Activated CD4-positive, alpha-beta T cell treated with anti-CD3 and anti-CD28 coated beads, Interleukin-2, amount 10 ng/mL, durations not matched to agents 7 days and 5 days (primary cell): ENCODE measurements at regions of chr2 and their contacts with region 1.

Region 1: DNA sequence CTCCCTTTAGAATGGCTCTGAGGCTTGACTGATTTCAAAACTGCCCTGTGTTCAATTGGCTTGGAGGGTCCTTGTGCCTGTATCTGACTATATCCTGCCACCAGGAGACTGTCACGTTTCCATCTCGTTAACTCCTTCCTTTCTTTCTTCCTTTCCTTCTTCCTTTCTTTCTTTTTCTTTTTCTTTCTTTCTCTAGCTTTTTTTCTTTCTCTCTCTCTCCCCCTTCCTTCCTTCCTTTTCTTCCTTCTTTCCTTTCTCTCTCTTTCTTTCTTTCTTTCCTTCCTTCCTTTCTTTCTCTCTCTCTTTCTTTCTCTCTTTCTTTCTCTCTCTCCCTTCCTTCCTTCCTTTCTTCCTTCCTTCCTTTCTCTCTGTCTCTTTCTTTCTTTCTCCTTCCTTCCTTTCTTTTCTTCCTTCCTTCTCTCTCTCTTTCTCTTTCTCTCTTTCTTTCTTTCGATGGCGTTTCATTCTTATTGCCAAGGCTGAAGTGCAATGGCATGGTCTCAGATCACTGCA is 38.1 kb upstream of the EML6 start:
- DNase-seq: no peak
- H3K4me3 Mint-ChIP-seq: no peak overlapping the region
- H3K27ac Mint-ChIP-seq: no peak overlapping the region
- H3K4me1 Mint-ChIP-seq: peaks cover 39% of the 10 kb centered on the region
- H3K27me3 Mint-ChIP-seq: peaks cover 27% of the 10 kb centered on the region

Region 2: GRCh38 chr2:54665436-54665856 is 19.9 kb before region 1 on chr2:
- CTCF ChIA-PET with region 1: interaction called, 19 read pairs
- POLR2A ChIA-PET with region 1: no interaction called
- DNase-seq: peak; percentile 61
- H3K4me3 Mint-ChIP-seq: no peak overlapping the region
- H3K27ac Mint-ChIP-seq: peak overlapping the region; percentile 61
- H3K4me1 Mint-ChIP-seq: peaks cover 16% of the 10 kb centered on the region
- H3K27me3 Mint-ChIP-seq: no peaks in the 10 kb centered on the region